Gastrocnemius medialis (tissue), 4 donors: ENCODE measurements at regions of chr5 and their contacts with region 1.

Region 1: DNA sequence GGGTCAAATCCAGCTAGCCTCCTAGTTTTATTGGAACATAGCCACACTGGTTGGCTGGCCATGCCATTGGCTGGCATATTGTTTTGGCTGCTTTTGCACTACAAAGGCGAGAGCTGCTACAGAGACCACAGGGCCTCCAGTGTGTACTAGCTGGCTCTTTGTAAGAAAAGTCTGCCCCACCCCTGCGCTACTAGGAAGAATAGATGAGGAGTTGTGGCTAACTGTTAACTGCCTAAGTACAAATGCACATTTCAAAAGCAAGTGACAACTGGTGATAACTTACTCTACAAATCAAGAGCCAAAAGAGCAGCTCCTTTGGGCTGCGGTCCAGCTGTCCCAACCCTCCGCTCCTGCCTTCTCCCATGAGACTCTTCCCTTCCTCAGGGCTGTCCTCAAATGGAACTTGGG is 63.9 kb downstream of the SERINC5 start:
- DNase-seq: peak in 1 of 2 donors; percentile 42
- ATAC-seq: peak; percentile 50 to 63
- H3K4me3 ChIP-seq: peak overlapping the region in 3 of 4 donors; percentile 26 to 30 (median 30)
- H3K27ac ChIP-seq: peak overlapping the region; percentile 59 to 85 (median 77)
- H3K4me1 ChIP-seq: peaks cover 44 to 50% of the 10 kb centered on the region in 2 donors
- H3K27me3 ChIP-seq: no peaks in the 10 kb centered on the region
- CTCF ChIP-seq: no peak
- POLR2A ChIP-seq: no peak

Region 2: GRCh38 chr5:79816014-79816413 is 376.0 kb before region 1 on chr5:
- in situ Hi-C with region 1: no loop called
- intact Hi-C with region 1: no loop called
- DNase-seq: no peak
- ATAC-seq: peak in 1 of 2 donors; percentile 18
- H3K4me3 ChIP-seq: no peak overlapping the region
- H3K27ac ChIP-seq: no peak overlapping the region
- H3K4me1 ChIP-seq: peaks cover 10 to 13% of the 10 kb centered on the region in 2 donors
- H3K27me3 ChIP-seq: no peaks in the 10 kb centered on the region
- CTCF ChIP-seq: no peak
- POLR2A ChIP-seq: no peak

Region 3: DNA sequence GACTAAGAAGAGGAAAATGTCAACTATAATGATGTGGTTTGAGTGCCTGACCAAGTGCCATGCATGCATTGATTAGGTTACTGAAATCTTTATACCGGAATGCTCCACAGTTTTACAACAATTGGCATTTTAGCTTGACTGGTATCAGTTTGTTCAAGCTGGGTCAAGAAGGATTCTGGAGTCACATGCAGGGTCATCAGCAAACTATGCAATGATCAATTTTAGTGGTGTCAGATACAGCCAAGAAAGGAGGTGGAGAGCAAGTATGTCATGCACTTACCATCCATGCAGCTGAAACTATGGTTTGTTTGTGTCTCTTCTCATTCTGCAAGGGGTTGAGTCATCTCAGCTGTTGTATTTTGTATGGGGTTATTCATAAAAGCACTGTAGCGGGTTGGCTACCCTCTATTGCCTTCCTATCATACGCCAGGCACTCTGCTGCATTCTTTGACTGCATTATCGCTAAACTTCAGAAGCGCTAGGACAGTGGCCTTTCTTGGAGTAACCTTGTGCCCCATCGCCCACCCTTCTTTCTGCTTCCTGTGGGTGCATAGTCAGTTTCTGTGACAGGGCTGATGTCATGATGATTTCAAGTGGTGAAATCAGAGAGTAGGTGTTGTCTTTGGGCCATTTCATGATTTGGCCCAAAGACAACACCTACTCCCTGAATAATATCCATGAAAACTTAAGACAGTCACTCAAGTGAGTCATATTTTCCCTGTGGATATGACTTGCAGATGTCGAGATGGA is 346.4 kb before region 1 on chr5:
- in situ Hi-C with region 1: no loop called
- intact Hi-C with region 1: no loop called
- DNase-seq: no peak
- ATAC-seq: peak; percentile 34 to 56
- H3K4me3 ChIP-seq: no peak overlapping the region
- H3K27ac ChIP-seq: peak overlapping the region in 1 of 4 donors; percentile 21
- H3K4me1 ChIP-seq: no peaks in the 10 kb centered on the region
- H3K27me3 ChIP-seq: no peaks in the 10 kb centered on the region
- CTCF ChIP-seq: no peak
- POLR2A ChIP-seq: no peak

Region 4: DNA sequence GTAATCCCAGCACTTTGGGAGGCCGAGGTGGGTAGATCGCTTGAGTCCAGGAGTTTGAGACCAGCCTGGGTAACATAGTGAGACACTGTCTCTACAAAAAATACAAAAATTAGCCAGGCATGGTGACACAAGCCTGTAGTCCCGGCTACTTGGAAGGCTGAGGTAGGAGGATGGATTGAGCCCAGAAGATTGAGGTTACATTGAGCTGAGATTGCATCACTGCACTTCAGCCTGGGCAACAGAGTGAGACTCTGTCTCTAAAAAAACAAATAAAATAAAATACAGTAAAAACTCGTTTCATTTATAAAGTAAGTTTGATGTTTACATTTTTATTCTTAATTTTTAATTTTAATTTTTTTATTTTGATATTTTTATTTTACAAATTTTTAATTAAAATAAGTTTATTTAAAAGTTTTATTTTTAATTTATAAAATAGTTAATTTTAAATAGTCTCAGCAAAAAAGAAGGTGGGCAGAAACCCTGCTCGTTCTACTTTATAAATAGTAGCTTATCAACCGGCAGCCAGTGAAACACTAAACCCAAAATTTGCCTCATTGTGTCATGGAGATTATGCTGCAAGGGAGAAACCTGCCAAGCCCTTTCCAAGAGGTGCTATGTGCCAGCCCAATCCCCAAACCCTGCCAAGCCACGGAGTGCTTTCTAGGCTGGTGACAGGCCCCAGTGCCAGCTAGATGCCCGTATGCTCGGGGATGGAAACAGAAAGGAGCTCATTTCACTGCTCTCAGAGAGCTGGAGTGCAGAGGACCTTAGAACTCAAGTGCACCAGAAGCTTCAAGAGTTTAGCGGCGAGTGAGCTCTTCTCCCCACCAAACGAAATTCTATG is 25.0 kb after region 1 on chr5:
- in situ Hi-C with region 1: no loop called
- intact Hi-C with region 1: loop called (anchors 1 kb)
- DNase-seq: peak; percentile 86 to 91
- ATAC-seq: peak; percentile 99
- H3K4me3 ChIP-seq: no peak overlapping the region
- H3K27ac ChIP-seq: peak overlapping the region in 3 of 4 donors; percentile 34 to 64 (median 56)
- H3K4me1 ChIP-seq: peaks cover 15 to 20% of the 10 kb centered on the region in 2 donors
- H3K27me3 ChIP-seq: no peaks in the 10 kb centered on the region
- CTCF ChIP-seq: no peak
- POLR2A ChIP-seq: no peak

Region 5: GRCh38 chr5:80302636-80303035 is 110.6 kb after region 1 on chr5:
- in situ Hi-C with region 1: no loop called
- intact Hi-C with region 1: no loop called
- DNase-seq: no peak
- ATAC-seq: no peak
- H3K4me3 ChIP-seq: no peak overlapping the region
- H3K27ac ChIP-seq: no peak overlapping the region
- H3K4me1 ChIP-seq: no peaks in the 10 kb centered on the region
- H3K27me3 ChIP-seq: no peaks in the 10 kb centered on the region
- CTCF ChIP-seq: no peak
- POLR2A ChIP-seq: no peak